CD4-positive, alpha-beta T cell (primary cell): ENCODE measurements at regions of chr1 and their contacts with region 1.

Region 1: GRCh38 chr1:206583707-206584648 is 28.3 kb downstream of the EIF2D start:
- DNase-seq: peak; percentile 77 to 94 (median 86)
- ATAC-seq: peak; percentile 33
- H3K4me3 ChIP-seq: no peak overlapping the region
- H3K4me3 Mint-ChIP-seq: peak overlapping the region; percentile 84
- H3K27ac ChIP-seq: peak overlapping the region; percentile 93 to 95
- H3K27ac Mint-ChIP-seq: peak overlapping the region; percentile 86
- H3K4me1 ChIP-seq: peaks cover 78% of the 10 kb centered on the region
- H3K4me1 Mint-ChIP-seq: peaks cover 66% of the 10 kb centered on the region
- H3K27me3 ChIP-seq: no peaks in the 10 kb centered on the region
- H3K27me3 Mint-ChIP-seq: no peaks in the 10 kb centered on the region
- CTCF ChIP-seq: peak; percentile 88

Region 2: GRCh38 chr1:206461602-206462455 is 122.1 kb before region 1 on chr1:
- CTCF ChIA-PET with region 1: interaction called, 4 read pairs
- POLR2A ChIA-PET with region 1: no interaction called
- intact Hi-C with region 1: loop called in 1 of 2 experiments (anchors 2 kb)
- DNase-seq: peak; percentile 49 to 86 (median 72)
- ATAC-seq: peak; percentile 87
- H3K4me3 ChIP-seq: no peak overlapping the region
- H3K4me3 Mint-ChIP-seq: no peak overlapping the region
- H3K27ac ChIP-seq: no peak overlapping the region
- H3K27ac Mint-ChIP-seq: peak overlapping the region; percentile 16
- H3K4me1 ChIP-seq: peaks cover 25% of the 10 kb centered on the region
- H3K4me1 Mint-ChIP-seq: peaks cover 17% of the 10 kb centered on the region
- H3K27me3 ChIP-seq: no peaks in the 10 kb centered on the region
- H3K27me3 Mint-ChIP-seq: no peaks in the 10 kb centered on the region
- CTCF ChIP-seq: peak; percentile 80

Region 3: GRCh38 chr1:206479183-206480125 is 104.5 kb before region 1 on chr1:
- CTCF ChIA-PET with region 1: interaction called, 8 read pairs
- POLR2A ChIA-PET with region 1: interaction called, 7 read pairs
- intact Hi-C with region 1: loop called (anchors 1 to 5 kb)
- DNase-seq: peak; percentile 46 to 84 (median 60)
- ATAC-seq: peak; percentile 93
- H3K4me3 ChIP-seq: no peak overlapping the region
- H3K4me3 Mint-ChIP-seq: no peak overlapping the region
- H3K27ac ChIP-seq: no peak overlapping the region
- H3K27ac Mint-ChIP-seq: peak overlapping the region; percentile 23
- H3K4me1 ChIP-seq: peaks cover 13% of the 10 kb centered on the region
- H3K4me1 Mint-ChIP-seq: peaks cover 15% of the 10 kb centered on the region
- H3K27me3 ChIP-seq: no peaks in the 10 kb centered on the region
- H3K27me3 Mint-ChIP-seq: no peaks in the 10 kb centered on the region
- CTCF ChIP-seq: peak; percentile 73

Region 4: DNA sequence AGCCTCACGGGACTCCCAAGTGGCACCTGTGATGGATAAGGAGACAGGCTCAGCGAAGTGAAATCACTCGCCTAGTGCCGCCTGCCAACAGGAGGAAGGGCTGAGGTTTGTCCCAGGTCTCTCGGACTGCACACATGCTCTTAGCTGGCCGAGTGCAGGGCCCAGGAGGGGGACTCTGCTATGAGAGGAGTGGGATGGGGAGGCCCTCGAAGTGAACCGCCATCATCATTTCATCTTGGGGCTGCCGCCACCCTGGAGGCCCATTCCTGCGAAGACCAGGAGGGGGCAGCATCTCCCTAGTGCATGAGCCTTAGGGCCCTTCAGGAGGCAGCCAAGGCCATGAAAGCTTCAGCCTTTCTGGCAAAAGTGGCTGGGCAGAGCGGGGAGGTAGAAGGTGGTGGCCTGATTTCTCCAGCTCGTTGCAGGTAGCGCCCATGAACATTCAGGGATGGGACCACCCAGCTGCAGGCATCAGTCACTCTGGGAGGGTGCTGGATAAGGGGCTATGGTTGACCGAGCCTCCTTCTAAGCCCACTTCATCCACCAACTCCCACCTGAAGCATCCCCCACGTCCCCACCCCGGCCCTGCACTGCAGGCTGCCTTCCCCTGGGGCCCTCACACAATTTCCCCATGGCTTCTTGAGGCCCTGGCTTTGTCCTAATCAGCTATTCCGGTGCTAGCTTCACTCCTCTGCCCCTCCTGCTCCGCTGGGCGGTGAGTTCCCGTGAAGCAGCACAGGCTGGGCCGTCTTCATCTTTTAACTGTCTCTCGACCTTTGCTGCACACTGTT is 93.8 kb before region 1 on chr1:
- CTCF ChIA-PET with region 1: interaction called, 7 read pairs
- POLR2A ChIA-PET with region 1: no interaction called
- intact Hi-C with region 1: loop called (anchors 1 to 5 kb)
- DNase-seq: peak; percentile 53 to 79 (median 63)
- ATAC-seq: peak; percentile 92
- H3K4me3 ChIP-seq: no peak overlapping the region
- H3K4me3 Mint-ChIP-seq: no peak overlapping the region
- H3K27ac ChIP-seq: no peak overlapping the region
- H3K27ac Mint-ChIP-seq: no peak overlapping the region
- H3K4me1 ChIP-seq: peaks cover 4% of the 10 kb centered on the region
- H3K4me1 Mint-ChIP-seq: no peaks in the 10 kb centered on the region
- H3K27me3 ChIP-seq: no peaks in the 10 kb centered on the region
- H3K27me3 Mint-ChIP-seq: no peaks in the 10 kb centered on the region
- CTCF ChIP-seq: peak; percentile 68

Region 5: DNA sequence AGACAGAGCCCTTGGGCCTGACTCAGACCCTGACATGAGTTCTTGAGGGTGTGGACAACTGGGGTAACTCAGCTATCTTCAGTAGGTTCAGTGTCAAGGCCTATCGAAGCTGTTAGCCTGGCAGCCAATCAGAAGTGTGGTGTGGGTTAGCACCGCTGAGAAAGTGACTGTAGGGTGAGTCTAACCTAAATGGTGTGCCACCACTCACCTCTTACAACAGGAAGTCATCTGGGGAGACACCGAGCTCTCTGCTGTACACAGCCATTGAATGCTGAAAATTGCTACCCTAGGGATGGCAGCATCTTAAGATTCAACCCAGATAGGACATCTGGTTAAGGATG is 32.0 kb before region 1 on chr1:
- CTCF ChIA-PET with region 1: interaction called, 236 read pairs
- POLR2A ChIA-PET with region 1: interaction called, 135 read pairs
- intact Hi-C with region 1: loop called (anchors 1 kb)
- DNase-seq: peak; percentile 53 to 94 (median 70)
- ATAC-seq: peak; percentile 90
- H3K4me3 ChIP-seq: no peak overlapping the region
- H3K4me3 Mint-ChIP-seq: peak overlapping the region; percentile 80
- H3K27ac ChIP-seq: peak overlapping the region; percentile 72 to 81
- H3K27ac Mint-ChIP-seq: peak overlapping the region; percentile 86
- H3K4me1 ChIP-seq: peaks cover 64% of the 10 kb centered on the region
- H3K4me1 Mint-ChIP-seq: peaks cover 63% of the 10 kb centered on the region
- H3K27me3 ChIP-seq: no peaks in the 10 kb centered on the region
- H3K27me3 Mint-ChIP-seq: no peaks in the 10 kb centered on the region
- CTCF ChIP-seq: peak; percentile 39

Region 6: DNA sequence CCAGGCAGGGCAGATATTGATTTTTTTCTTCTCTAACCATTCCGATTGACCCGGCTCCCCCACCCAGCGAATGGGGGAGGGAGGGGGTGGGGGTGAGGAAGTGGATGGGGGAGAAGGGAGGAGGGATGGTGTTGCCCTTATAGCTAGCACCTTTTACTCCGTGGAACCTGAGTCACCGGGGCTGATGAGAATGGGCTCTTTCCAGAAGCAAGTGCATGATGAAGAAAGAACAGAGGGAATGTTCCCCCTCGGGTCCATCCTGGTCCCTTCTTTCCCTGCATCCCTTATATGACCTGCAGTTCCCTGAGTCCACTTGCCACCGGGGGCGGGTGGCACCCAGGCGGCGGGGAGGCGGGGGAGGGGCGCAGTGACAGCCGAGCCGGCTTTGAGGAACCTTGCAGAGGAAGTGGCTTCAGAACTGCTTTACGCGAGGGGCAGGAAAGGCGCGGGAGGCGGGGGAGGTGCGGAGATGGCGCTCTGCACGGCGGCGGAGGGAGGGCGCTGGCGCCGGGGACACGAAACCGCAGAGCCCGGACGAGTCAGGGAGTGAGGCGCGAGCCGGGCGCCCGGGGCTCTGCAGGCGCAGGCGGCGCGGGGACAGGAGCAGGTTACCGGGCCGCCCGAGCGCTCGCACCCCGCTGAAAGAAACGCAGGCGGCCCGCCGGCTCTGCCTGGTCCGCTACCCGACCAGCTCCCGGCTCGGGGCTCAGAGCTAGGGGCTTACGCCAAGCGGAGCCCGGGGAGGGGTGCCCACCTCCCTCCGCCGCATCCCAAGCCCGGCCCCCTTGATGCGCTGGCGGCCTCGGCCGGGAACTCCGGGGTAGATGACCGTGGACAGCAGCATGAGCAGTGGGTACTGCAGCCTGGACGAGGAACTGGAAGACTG is 27.0 kb before region 1 on chr1:
- CTCF ChIA-PET with region 1: interaction called, 236 read pairs
- POLR2A ChIA-PET with region 1: interaction called, 169 read pairs
- intact Hi-C with region 1: loop called (anchors 1 kb)
- DNase-seq: peak; percentile 72 to 96 (median 90)
- ATAC-seq: peak; percentile 69
- H3K4me3 ChIP-seq: peak overlapping the region; percentile 94
- H3K4me3 Mint-ChIP-seq: peak overlapping the region; percentile 97
- H3K27ac ChIP-seq: peak overlapping the region; percentile 69 to 99
- H3K27ac Mint-ChIP-seq: peak overlapping the region; percentile 86
- H3K4me1 ChIP-seq: peaks cover 77% of the 10 kb centered on the region
- H3K4me1 Mint-ChIP-seq: peaks cover 86% of the 10 kb centered on the region
- H3K27me3 ChIP-seq: no peaks in the 10 kb centered on the region
- H3K27me3 Mint-ChIP-seq: no peaks in the 10 kb centered on the region
- CTCF ChIP-seq: no peak

Region 7: GRCh38 chr1:206563367-206564207 is 20.4 kb before region 1 on chr1:
- CTCF ChIA-PET with region 1: interaction called, 236 read pairs
- POLR2A ChIA-PET with region 1: interaction called, 169 read pairs
- intact Hi-C with region 1: no loop called
- DNase-seq: no peak
- ATAC-seq: peak; percentile 21
- H3K4me3 ChIP-seq: peak overlapping the region; percentile 25
- H3K4me3 Mint-ChIP-seq: peak overlapping the region; percentile 76
- H3K27ac ChIP-seq: peak overlapping the region; percentile 56 to 82
- H3K27ac Mint-ChIP-seq: peak overlapping the region; percentile 86
- H3K4me1 ChIP-seq: peaks cover 94% of the 10 kb centered on the region
- H3K4me1 Mint-ChIP-seq: peaks cover 100% of the 10 kb centered on the region
- H3K27me3 ChIP-seq: no peaks in the 10 kb centered on the region
- H3K27me3 Mint-ChIP-seq: no peaks in the 10 kb centered on the region
- CTCF ChIP-seq: no peak